Activated B cell treated with CpG ODN at 0.5 μM for 24 hours (primary cell): ENCODE measurements at regions of chr3 and their contacts with region 1.

Region 1: DNA sequence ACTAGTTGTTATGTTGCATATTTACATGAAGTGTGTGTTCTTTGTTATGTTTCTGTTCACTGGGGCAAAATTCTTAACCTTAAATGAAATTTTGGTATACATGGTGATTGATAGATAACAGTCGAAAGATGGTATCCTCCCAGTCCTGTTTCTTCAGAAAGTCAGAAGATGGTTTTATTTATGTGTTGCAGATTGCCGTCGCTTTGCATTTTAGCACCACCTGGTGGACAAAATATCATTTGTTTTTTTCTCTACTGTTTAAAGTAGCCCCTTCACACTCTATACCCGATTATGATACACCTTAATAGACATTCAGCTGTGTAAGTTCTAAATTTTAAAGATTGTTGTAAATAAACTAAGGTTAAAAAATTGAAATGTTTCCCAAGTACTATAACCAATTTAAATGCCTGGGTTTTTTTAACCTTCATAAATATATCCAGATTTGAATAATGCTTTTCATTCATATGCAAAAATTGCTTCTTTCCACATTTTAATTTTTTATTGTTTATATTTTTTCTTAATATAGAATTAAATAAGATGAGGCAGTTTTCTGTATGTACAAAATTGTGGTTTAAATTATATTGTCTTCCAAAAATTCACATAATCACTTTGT is 152.2 kb downstream of the ALCAM start:
- DNase-seq: no peak
- ATAC-seq: peak; percentile 65
- H3K4me3 Mint-ChIP-seq: no peak overlapping the region
- H3K27ac Mint-ChIP-seq: no peak overlapping the region
- H3K4me1 Mint-ChIP-seq: peaks cover 7% of the 10 kb centered on the region
- H3K27me3 Mint-ChIP-seq: no peaks in the 10 kb centered on the region
- CTCF ChIP-seq: no peak

Region 2: GRCh38 chr3:103991461-103992115 is 1527.3 kb before region 1 on chr3:
- CTCF ChIA-PET with region 1: no interaction called
- POLR2A ChIA-PET with region 1: no interaction called
- intact Hi-C with region 1: loop called (anchors 2 kb)
- DNase-seq: no peak
- ATAC-seq: no peak
- H3K4me3 Mint-ChIP-seq: no peak overlapping the region
- H3K27ac Mint-ChIP-seq: no peak overlapping the region
- H3K4me1 Mint-ChIP-seq: no peaks in the 10 kb centered on the region
- H3K27me3 Mint-ChIP-seq: no peaks in the 10 kb centered on the region
- CTCF ChIP-seq: no peak

Region 3: DNA sequence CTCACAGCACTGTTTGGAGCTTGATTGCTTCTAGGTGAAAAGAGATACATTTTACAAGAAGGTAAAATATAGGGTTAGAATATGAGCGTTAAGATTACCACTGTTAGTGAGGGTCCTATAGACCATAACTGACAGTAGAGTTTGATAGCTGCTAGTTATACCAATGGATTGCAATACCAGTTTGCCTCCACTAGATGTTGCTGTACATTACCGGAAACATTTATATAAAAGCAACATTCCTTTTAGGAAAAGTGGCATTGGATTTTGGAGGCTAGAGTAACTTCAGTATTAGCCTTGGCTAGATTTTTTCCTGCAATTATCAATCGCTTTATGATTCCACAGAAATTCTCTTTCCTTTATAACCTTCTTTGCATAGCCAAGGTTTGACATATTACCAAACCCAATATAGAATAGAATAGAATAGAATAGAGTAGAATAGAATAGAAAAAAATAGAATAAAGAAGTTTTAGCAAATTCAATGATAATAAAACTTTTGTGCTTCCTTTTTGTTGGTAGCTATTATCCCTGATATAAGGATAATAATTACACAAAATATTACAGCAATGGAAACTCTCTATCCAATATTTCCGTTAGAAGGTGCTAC is 1245.8 kb before region 1 on chr3:
- CTCF ChIA-PET with region 1: interaction called, 16 read pairs
- POLR2A ChIA-PET with region 1: no interaction called
- intact Hi-C with region 1: loop called (anchors 1 kb)
- DNase-seq: no peak
- ATAC-seq: peak; percentile 56
- H3K4me3 Mint-ChIP-seq: no peak overlapping the region
- H3K27ac Mint-ChIP-seq: no peak overlapping the region
- H3K4me1 Mint-ChIP-seq: no peaks in the 10 kb centered on the region
- H3K27me3 Mint-ChIP-seq: no peaks in the 10 kb centered on the region
- CTCF ChIP-seq: peak; percentile 72

Region 4: GRCh38 chr3:104596551-104596950 is 922.4 kb before region 1 on chr3:
- CTCF ChIA-PET with region 1: interaction called, 10 read pairs
- POLR2A ChIA-PET with region 1: no interaction called
- intact Hi-C with region 1: loop called (anchors 1 kb)
- DNase-seq: no peak
- ATAC-seq: peak; percentile 67
- H3K4me3 Mint-ChIP-seq: no peak overlapping the region
- H3K27ac Mint-ChIP-seq: no peak overlapping the region
- H3K4me1 Mint-ChIP-seq: peaks cover 3% of the 10 kb centered on the region
- H3K27me3 Mint-ChIP-seq: no peaks in the 10 kb centered on the region
- CTCF ChIP-seq: no peak

Region 5: DNA sequence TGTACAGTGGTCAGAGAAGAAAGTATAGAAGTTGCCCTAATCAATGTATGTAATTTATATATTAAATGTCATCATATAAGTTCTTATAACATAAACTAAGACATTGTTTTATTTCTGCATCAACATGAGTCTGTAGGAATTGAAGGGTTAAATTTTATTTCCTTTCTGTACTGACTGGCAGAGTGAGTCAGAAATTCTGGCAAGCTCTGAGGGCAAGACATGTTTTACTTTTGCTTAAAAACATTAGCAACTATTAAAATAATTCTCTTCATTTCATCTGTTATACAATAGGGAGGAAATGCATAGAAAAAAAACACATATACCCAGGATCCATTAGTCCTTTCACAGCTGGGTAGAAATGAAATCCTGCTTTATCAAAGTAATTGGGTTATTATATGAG is 323.7 kb before region 1 on chr3:
- CTCF ChIA-PET with region 1: no interaction called
- POLR2A ChIA-PET with region 1: no interaction called
- intact Hi-C with region 1: loop called (anchors 10 kb)
- DNase-seq: no peak
- ATAC-seq: no peak
- H3K4me3 Mint-ChIP-seq: no peak overlapping the region
- H3K27ac Mint-ChIP-seq: no peak overlapping the region
- H3K4me1 Mint-ChIP-seq: no peaks in the 10 kb centered on the region
- H3K27me3 Mint-ChIP-seq: no peaks in the 10 kb centered on the region
- CTCF ChIP-seq: no peak

Region 6: DNA sequence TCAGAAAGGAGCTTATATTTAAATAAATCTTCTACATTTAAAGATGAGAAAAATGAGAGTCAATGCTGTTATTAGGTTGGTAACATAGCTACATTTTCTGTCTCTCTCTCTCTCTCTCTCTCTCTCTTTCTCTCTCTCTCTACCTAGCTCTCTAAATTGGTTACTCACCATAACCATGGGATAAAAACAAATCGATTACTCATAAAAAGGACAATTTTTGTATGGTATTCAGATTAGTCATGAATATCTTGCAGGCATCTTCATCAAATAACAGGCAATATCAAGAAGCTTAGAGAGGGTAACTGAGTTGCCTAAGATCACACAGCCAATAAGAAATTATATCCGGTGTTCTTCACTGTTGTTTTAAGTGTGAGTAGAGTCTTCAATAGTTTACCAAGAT is 234.0 kb before region 1 on chr3:
- CTCF ChIA-PET with region 1: no interaction called
- POLR2A ChIA-PET with region 1: no interaction called
- intact Hi-C with region 1: no loop called
- DNase-seq: no peak
- ATAC-seq: no peak
- H3K4me3 Mint-ChIP-seq: no peak overlapping the region
- H3K27ac Mint-ChIP-seq: no peak overlapping the region
- H3K4me1 Mint-ChIP-seq: no peaks in the 10 kb centered on the region
- H3K27me3 Mint-ChIP-seq: no peaks in the 10 kb centered on the region
- CTCF ChIP-seq: no peak